Activated CD4-positive, alpha-beta T cell treated with anti-CD3 and anti-CD28 coated beads for 36 hours (primary cell): ENCODE measurements at regions of chr3 and their contacts with region 1.

Region 1: GRCh38 chr3:186108941-186109865 is at the start of gene ETV5:
- DNase-seq: peak; percentile 96
- ATAC-seq: peak; percentile 96
- H3K4me3 Mint-ChIP-seq: peak within 1 kb of the TSS; percentile 73
- H3K27ac Mint-ChIP-seq: peak within 1 kb of the TSS; percentile 42
- H3K4me1 Mint-ChIP-seq: peaks cover 34% of the 10 kb centered on the region
- H3K27me3 Mint-ChIP-seq: peaks cover 69% of the 10 kb centered on the region
- total RNA-seq, gene ETV5: 0.83 to 1.4 TPM

Region 2: GRCh38 chr3:185824476-185825378 is 284.5 kb before region 1 on chr3 and contains the start of gene IGF2BP2:
- CTCF ChIA-PET with region 1: no interaction called
- POLR2A ChIA-PET with region 1: no interaction called
- intact Hi-C with region 1: loop called in 1 of 2 experiments (anchors 5 kb)
- DNase-seq: peak; percentile 76
- ATAC-seq: peak; percentile 84
- H3K4me3 Mint-ChIP-seq: peak within 1 kb of the TSS; percentile 74
- H3K27ac Mint-ChIP-seq: peak within 1 kb of the TSS; percentile 48
- H3K4me1 Mint-ChIP-seq: peaks cover 8% of the 10 kb centered on the region
- H3K27me3 Mint-ChIP-seq: peaks cover 59% of the 10 kb centered on the region
- total RNA-seq, gene IGF2BP2: 0.54 to 0.55 TPM

Region 3: GRCh38 chr3:186025161-186025560 is 84.0 kb before region 1 on chr3:
- CTCF ChIA-PET with region 1: interaction called, 3 read pairs
- POLR2A ChIA-PET with region 1: no interaction called
- intact Hi-C with region 1: loop called in 1 of 2 experiments (anchors 1 kb)
- DNase-seq: peak; percentile 80
- ATAC-seq: peak; percentile 98
- H3K4me3 Mint-ChIP-seq: no peak overlapping the region
- H3K27ac Mint-ChIP-seq: no peak overlapping the region
- H3K4me1 Mint-ChIP-seq: peaks cover 17% of the 10 kb centered on the region
- H3K27me3 Mint-ChIP-seq: peaks cover 8% of the 10 kb centered on the region

Region 4: GRCh38 chr3:186185194-186185787 is 76.1 kb after region 1 on chr3:
- CTCF ChIA-PET with region 1: no interaction called
- POLR2A ChIA-PET with region 1: no interaction called
- intact Hi-C with region 1: no loop called
- DNase-seq: peak; percentile 40
- ATAC-seq: peak; percentile 86
- H3K4me3 Mint-ChIP-seq: no peak overlapping the region
- H3K27ac Mint-ChIP-seq: no peak overlapping the region
- H3K4me1 Mint-ChIP-seq: peaks cover 12% of the 10 kb centered on the region
- H3K27me3 Mint-ChIP-seq: no peaks in the 10 kb centered on the region

Region 5: DNA sequence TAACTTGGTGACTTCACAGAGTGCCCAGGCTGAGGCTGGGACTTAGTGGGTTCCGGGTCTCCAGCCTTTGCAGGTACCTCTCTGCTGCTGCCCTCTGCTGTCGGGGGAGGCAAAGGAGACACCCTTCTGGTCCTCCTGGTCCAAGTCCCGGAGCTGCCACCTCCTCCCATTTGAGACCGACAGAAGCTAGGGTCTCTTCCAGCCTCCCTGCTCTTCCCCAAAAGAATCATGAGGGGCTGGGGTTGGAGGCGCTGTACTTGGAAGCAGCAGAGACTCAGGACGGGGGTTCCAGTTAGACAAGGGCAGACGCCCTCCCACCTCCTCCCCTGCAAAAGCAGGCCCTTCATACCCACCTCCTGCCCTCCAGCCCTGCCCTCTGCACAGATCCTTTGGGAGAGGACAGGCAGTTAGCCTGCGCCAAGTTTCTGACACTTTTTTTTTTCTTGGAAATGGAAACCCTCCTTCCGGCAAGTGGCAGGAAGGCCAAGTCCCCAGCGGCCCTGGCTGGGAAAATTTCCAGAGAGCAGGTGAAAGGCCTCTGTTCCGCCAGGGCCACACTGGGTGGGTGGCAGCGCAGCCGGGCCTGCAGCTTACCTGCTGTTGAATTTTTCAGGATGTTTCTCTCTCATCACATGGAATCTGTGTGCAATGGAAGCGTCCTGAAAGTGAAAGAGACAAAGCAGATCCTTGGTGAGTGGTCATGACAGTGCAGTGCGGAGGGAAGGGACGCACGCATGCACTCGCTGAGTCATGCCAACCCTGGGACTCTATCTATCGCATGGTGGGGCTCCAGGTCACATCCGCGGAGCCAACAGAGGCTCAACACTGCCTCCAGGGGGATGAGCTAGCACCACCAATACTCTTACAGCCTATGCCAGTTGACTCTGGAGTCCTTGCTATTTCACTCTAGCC is 133.0 kb after region 1 on chr3:
- CTCF ChIA-PET with region 1: interaction called, 3 read pairs
- POLR2A ChIA-PET with region 1: no interaction called
- intact Hi-C with region 1: loop called (anchors 1 to 5 kb)
- DNase-seq: peak; percentile 84
- ATAC-seq: peak; percentile 97
- H3K4me3 Mint-ChIP-seq: peak overlapping the region; percentile 30
- H3K27ac Mint-ChIP-seq: no peak overlapping the region
- H3K4me1 Mint-ChIP-seq: peaks cover 9% of the 10 kb centered on the region
- H3K27me3 Mint-ChIP-seq: peaks cover 9% of the 10 kb centered on the region

Region 6: GRCh38 chr3:186570096-186570940 is 461.1 kb after region 1 on chr3 and contains the start of gene DNAJB11:
- CTCF ChIA-PET with region 1: interaction called, 3 read pairs
- POLR2A ChIA-PET with region 1: interaction called, 4 read pairs
- intact Hi-C with region 1: loop called (anchors 1 kb)
- DNase-seq: peak; percentile 100
- ATAC-seq: peak; percentile 92
- H3K4me3 Mint-ChIP-seq: peak within 1 kb of the TSS; percentile 93
- H3K27ac Mint-ChIP-seq: peak within 1 kb of the TSS; percentile 95
- H3K4me1 Mint-ChIP-seq: peaks cover 50% of the 10 kb centered on the region
- H3K27me3 Mint-ChIP-seq: no peaks in the 10 kb centered on the region
- total RNA-seq, gene DNAJB11: 30.9 to 36.6 TPM